GM10248 (cell line): ENCODE measurements at regions of chr6 and their contacts with region 1.

Region 1: DNA sequence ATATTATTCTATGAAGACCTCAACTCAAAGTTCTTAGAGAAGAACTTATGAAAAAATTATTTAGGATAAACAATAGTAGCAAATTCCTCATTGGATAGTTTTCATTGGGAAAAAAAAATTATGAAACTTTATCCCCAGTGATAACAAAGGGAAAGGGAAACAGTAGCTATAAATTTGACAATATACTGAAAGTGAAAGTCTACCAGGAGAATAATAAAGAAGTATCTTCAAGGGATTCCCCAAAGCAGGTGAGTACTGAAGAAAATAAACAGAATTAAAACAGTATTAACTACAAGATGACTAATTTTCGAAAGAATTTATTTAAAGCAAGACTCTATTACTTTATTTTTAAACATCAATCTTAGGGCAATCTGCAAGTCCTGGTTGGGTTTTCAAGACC is 56.4 kb downstream of the REPS1 start:
- DNase-seq: peak; percentile 16
- CTCF ChIP-seq: no peak

Region 2: DNA sequence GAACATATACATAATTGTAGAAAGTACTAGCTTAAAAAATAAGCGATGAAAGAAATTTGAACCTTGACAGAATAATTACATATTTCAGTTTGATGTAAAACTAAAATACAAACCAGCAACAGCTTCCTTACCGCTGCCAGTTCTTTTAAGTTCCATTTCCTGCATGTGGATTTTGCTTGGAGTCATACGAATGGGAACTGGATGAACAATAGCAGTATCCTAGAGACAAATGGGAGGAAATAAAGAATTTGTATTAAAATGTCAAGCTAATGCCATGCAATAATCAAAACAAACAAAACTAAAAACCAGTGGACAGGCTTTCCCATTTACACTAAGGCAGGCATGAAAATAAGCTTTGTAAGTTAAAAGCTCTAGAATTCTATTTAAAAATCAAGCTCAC is 10.8 kb before region 1 on chr6:
- CTCF ChIA-PET with region 1: interaction called, 23 read pairs
- POLR2A ChIA-PET with region 1: interaction called, 5 read pairs
- DNase-seq: no peak
- CTCF ChIP-seq: no peak